ENCODE measurements at regions of chr5 and their contacts with region 1.

Region 1: DNA sequence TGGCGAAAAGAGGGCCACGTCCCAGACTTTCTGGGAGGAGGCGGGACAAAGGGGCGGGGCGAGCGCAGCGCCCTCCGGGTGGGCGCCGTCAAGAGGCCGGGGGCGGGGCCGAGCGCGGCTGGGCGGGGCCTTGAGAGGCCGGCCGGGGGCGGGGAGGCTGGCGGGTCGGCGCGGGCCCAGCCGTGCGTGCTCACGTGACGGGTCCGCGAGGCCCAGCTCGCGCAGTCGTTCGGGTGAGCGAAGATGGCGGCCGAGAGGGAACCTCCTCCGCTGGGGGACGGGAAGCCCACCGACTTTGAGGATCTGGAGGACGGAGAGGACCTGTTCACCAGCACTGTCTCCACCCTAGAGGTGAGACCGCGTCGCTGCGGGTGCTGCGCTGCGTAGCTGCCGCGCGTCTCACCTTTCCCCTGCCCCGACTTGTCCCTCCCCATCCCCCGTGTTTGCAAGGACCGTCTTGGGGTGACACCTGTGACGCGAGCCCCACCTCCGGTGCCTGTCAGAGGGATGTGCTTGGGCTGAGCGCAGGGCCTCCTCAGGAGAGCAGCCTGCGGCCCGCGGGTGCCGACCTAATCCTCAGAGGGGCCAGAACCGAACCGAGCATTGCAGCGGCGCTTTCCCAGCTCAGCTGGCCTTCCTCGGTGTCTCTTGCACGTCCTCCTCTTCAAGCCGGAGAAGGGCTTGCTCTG is at the start of gene SNX2:
- DNase-seq: peak; percentile 85 to 89 (median 88)
- H3K4me3 ChIP-seq: peak within 1 kb of the TSS; percentile 71 to 89
- H3K4me3 Mint-ChIP-seq: peak within 1 kb of the TSS; percentile 95 to 99 (median 96)
- H3K27ac ChIP-seq: peak within 1 kb of the TSS; percentile 72
- H3K27ac Mint-ChIP-seq: peak within 1 kb of the TSS; percentile 94 to 97 (median 96)
- H3K4me1 ChIP-seq: peaks cover 39% of the 10 kb centered on the region
- H3K4me1 Mint-ChIP-seq: peaks cover 31 to 53% (median 43%) of the 10 kb centered on the region in 4 donors
- H3K27me3 ChIP-seq: no peaks in the 10 kb centered on the region
- H3K27me3 Mint-ChIP-seq: peaks cover 0 to 3% of the 10 kb centered on the region in 2 donors
- total RNA-seq, gene SNX2: 57.3 to 58.1 TPM

Region 2: DNA sequence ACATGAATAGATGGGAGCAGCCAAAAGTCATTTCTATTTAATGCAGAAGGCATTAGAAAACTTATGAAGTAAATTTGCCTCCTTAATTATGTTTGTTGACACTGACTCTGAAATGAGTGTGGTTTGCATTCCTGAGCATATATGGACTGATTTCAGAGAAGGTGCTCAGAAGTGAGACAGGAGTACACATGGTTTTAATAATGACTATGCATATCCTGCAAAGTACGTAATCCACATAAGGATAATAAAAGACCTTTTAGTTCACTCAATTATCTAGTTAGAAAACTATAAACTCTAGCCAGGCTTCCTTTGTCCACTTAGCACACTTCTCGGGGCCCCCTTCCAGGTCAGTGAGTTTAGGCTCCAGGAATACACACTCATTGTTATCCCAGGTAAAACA is 75.8 kb before region 1 on chr5:
- CTCF ChIA-PET with region 1: no interaction called
- POLR2A ChIA-PET with region 1: no interaction called
- intact Hi-C with region 1: no loop called
- DNase-seq: no peak
- H3K4me3 ChIP-seq: no peak overlapping the region
- H3K4me3 Mint-ChIP-seq: no peak overlapping the region
- H3K27ac ChIP-seq: no peak overlapping the region
- H3K27ac Mint-ChIP-seq: no peak overlapping the region
- H3K4me1 ChIP-seq: no peaks in the 10 kb centered on the region
- H3K4me1 Mint-ChIP-seq: no peaks in the 10 kb centered on the region
- H3K27me3 ChIP-seq: no peaks in the 10 kb centered on the region
- H3K27me3 Mint-ChIP-seq: peaks cover 1% of the 10 kb centered on the region in 2 donors

Region 3: GRCh38 chr5:122845229-122846050 is 70.4 kb after region 1 on chr5 and contains the start of gene SNX24:
- CTCF ChIA-PET with region 1: no interaction called
- POLR2A ChIA-PET with region 1: interaction called, 25 read pairs
- intact Hi-C with region 1: loop called (anchors 1 kb)
- DNase-seq: peak; percentile 72 to 81 (median 77)
- H3K4me3 ChIP-seq: peak within 1 kb of the TSS; percentile 79 to 96
- H3K4me3 Mint-ChIP-seq: peak within 1 kb of the TSS; percentile 90 to 94 (median 94)
- H3K27ac ChIP-seq: peak within 1 kb of the TSS; percentile 68
- H3K27ac Mint-ChIP-seq: peak within 1 kb of the TSS; percentile 87 to 95 (median 94)
- H3K4me1 ChIP-seq: peaks cover 25% of the 10 kb centered on the region
- H3K4me1 Mint-ChIP-seq: peaks cover 26 to 42% (median 35%) of the 10 kb centered on the region in 4 donors
- H3K27me3 ChIP-seq: no peaks in the 10 kb centered on the region
- H3K27me3 Mint-ChIP-seq: no peaks in the 10 kb centered on the region
- total RNA-seq, gene SNX24: 4.4 to 7.2 TPM